Endothelial cell of umbilical vein (primary cell): ENCODE measurements at regions of chr19 and their contacts with region 1.

Region 1: DNA sequence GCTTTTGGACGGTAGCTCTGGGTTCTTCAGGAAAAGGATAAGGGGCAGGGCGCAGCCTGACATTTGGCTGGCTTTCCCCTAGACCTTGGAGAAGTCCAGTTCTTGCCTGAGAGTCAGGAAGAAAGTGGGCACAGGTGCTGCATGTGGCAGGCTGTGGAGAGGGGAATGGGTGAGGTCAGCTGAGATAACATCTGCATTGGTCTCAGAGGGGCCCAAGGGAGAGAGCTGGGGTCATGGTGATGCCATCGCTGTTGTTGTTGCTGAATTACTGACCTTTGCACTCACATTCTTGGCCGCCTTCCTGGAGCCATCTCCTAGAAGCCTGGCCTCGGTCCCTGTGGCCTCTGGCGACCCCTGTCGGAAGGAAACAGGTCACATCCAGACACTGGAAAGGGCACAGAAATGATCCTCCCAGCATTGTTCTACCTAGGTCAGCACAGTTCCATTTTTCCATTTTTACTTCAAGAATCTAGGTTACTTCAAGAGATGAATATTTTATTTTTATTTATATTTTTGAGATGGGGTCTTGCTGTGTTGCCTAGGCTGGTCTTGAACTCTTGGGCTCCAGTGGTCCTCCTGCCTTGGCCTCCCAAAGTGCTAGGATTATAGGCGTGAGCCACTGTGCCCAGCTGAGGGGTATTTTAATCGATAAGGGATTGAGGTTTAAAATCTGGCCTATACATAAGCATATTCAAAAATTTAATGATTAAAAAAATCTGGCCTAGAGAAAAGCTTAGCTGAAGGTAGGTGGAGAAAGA is 6.5 kb upstream of the LIPE start:
- DNase-seq: peak; percentile 63
- H3K4me3 ChIP-seq: no peak overlapping the region
- H3K27ac ChIP-seq: no peak overlapping the region
- H3K4me1 ChIP-seq: peaks cover 10% of the 10 kb centered on the region
- H3K27me3 ChIP-seq: no peaks in the 10 kb centered on the region
- CTCF ChIP-seq: peak; percentile 62 to 69
- POLR2A ChIP-seq: no peak

Region 2: DNA sequence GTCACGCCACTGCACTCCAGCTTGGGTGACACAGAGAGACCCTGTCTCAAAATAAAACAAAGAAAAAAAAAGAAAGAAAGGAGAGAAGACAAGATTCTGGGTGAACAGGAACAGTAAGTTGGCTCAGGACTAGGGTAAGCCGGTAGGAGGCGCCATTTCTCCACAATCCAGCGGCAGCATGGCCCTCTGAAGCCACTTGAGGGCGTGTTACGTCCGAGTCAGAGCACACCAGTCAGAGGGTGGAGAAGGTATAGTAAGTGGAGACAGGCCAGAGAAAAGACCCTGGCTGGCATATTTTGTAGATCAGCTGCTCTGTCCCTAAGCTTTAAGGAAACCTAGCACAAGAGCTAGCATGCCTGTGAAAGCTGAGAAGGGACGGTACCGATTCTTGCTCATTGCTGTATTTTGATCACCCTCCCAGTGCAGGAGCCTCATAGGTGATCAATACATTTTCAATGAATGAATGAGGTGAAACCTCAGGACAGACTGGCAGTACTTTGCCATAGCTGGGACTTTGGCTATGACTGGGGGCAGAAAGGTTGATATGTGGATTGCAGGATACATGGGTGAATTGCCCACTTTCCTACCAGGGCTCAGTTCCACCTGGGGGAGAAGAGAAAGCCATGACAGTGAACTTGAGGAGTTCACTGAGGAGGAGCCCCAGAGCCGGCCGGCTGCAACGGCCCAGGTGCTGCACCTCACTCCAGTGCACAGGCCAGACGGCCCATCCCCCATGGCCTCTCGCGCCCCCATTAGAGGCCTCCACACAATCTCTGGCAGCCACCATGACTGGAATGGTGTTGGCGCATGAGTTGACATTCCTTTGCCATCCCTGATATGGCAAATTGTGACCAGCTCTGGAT is 324.9 kb before region 1 on chr19:
- CTCF ChIA-PET with region 1: interaction called, 3 read pairs
- POLR2A ChIA-PET with region 1: no interaction called
- dilution Hi-C with region 1: no loop called
- intact Hi-C with region 1: loop called (anchors 2 kb)
- DNase-seq: peak; percentile 90
- H3K4me3 ChIP-seq: no peak overlapping the region
- H3K27ac ChIP-seq: no peak overlapping the region
- H3K4me1 ChIP-seq: peaks cover 20% of the 10 kb centered on the region
- H3K27me3 ChIP-seq: peaks cover 3% of the 10 kb centered on the region in 2 experiments
- CTCF ChIP-seq: peak; percentile 99 to 100
- POLR2A ChIP-seq: no peak

Region 3: GRCh38 chr19:42386974-42387707 is 46.5 kb before region 1 on chr19:
- CTCF ChIA-PET with region 1: no interaction called
- POLR2A ChIA-PET with region 1: no interaction called
- dilution Hi-C with region 1: no loop called
- intact Hi-C with region 1: loop called (anchors 1 kb)
- DNase-seq: peak; percentile 41
- H3K4me3 ChIP-seq: peak overlapping the region in 2 of 3 experiments; percentile 10 to 23
- H3K27ac ChIP-seq: no peak overlapping the region
- H3K4me1 ChIP-seq: peaks cover 3% of the 10 kb centered on the region
- H3K27me3 ChIP-seq: peaks cover 12 to 20% of the 10 kb centered on the region in 2 experiments
- CTCF ChIP-seq: peak; percentile 39 to 54
- POLR2A ChIP-seq: no peak

Region 4: GRCh38 chr19:42396381-42397262 is 37.1 kb before region 1 on chr19:
- CTCF ChIA-PET with region 1: interaction called, 7 read pairs
- POLR2A ChIA-PET with region 1: interaction called, 3 read pairs
- dilution Hi-C with region 1: no loop called
- intact Hi-C with region 1: loop called (anchors 1 kb)
- DNase-seq: peak; percentile 100
- H3K4me3 ChIP-seq: peak overlapping the region; percentile 36 to 73 (median 49)
- H3K27ac ChIP-seq: peak overlapping the region; percentile 77
- H3K4me1 ChIP-seq: peaks cover 17% of the 10 kb centered on the region
- H3K27me3 ChIP-seq: no peaks in the 10 kb centered on the region
- CTCF ChIP-seq: no peak
- POLR2A ChIP-seq: peak; percentile 87

Region 5: GRCh38 chr19:42606660-42607351 is 173.1 kb after region 1 on chr19:
- CTCF ChIA-PET with region 1: no interaction called
- POLR2A ChIA-PET with region 1: no interaction called
- dilution Hi-C with region 1: no loop called
- intact Hi-C with region 1: no loop called
- DNase-seq: peak; percentile 8
- H3K4me3 ChIP-seq: no peak overlapping the region
- H3K27ac ChIP-seq: no peak overlapping the region
- H3K4me1 ChIP-seq: no peaks in the 10 kb centered on the region
- H3K27me3 ChIP-seq: no peaks in the 10 kb centered on the region
- CTCF ChIP-seq: peak; percentile 66 to 69
- POLR2A ChIP-seq: no peak